Common myeloid progenitor, CD34-positive (primary cell): ENCODE measurements at regions of chr4 and their contacts with region 1.

Region 1: DNA sequence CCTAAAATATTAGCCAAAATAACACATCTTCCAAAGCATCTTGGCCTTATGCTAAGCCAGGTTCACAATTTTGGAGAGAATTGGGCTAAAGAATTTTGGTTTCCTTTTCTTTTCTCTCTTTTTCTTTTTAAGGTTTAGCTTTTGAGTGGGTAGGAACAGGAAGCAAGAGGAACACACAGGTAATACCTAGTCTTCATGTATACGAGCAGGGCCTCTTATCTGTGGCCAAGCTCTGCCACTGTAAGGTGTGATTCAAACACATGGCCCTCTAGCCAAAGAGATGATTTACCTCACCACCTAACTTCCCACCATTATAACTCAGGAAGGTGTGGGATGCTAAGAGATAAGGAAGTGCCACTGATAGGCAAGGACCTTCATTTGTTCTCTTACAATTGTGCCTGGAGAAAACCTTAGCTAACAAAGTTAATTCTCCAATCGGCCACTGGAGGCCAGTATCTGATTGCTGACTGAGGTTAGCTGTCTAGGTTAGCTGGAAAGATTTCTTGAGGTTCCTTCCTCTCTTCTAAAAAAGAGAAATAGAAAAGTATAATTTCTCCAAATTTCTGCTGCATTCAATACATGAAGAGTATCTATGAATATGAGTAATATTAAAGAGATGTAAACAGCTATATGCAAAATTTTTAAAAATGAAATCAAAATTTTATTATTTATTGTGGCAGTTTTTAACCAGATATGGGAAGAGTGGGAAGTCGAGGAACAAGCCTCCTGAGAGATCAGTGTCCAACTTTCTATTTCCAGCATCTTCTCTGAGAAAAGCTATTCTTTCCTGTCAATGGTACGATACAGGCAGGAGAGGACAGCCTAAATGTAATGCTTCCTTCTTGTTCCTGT is 30.1 kb upstream of the BBS7 start:
- DNase-seq: peak; percentile 58 to 81 (median 73)
- H3K4me3 ChIP-seq: no peak overlapping the region
- H3K27ac ChIP-seq: no peak overlapping the region
- H3K4me1 ChIP-seq: peaks cover 0 to 5% (median 1%) of the 10 kb centered on the region in 4 experiments
- H3K27me3 ChIP-seq: peaks cover 0 to 22% (median 6%) of the 10 kb centered on the region in 5 experiments

Region 2: GRCh38 chr4:121462660-121463261 is 437.6 kb before region 1 on chr4:
- CTCF ChIA-PET with region 1: no interaction called
- POLR2A ChIA-PET with region 1: no interaction called
- DNase-seq: peak; percentile 75 to 95 (median 94)
- H3K4me3 ChIP-seq: no peak overlapping the region
- H3K27ac ChIP-seq: no peak overlapping the region
- H3K4me1 ChIP-seq: peaks cover 0 to 8% (median 0%) of the 10 kb centered on the region in 4 experiments
- H3K27me3 ChIP-seq: peaks cover 0 to 2% (median 0%) of the 10 kb centered on the region in 5 experiments

Region 3: GRCh38 chr4:121811122-121811521 is 89.2 kb before region 1 on chr4:
- CTCF ChIA-PET with region 1: no interaction called
- POLR2A ChIA-PET with region 1: no interaction called
- DNase-seq: no peak
- H3K4me3 ChIP-seq: no peak overlapping the region
- H3K27ac ChIP-seq: no peak overlapping the region
- H3K4me1 ChIP-seq: no peaks in the 10 kb centered on the region
- H3K27me3 ChIP-seq: no peaks in the 10 kb centered on the region

Region 4: DNA sequence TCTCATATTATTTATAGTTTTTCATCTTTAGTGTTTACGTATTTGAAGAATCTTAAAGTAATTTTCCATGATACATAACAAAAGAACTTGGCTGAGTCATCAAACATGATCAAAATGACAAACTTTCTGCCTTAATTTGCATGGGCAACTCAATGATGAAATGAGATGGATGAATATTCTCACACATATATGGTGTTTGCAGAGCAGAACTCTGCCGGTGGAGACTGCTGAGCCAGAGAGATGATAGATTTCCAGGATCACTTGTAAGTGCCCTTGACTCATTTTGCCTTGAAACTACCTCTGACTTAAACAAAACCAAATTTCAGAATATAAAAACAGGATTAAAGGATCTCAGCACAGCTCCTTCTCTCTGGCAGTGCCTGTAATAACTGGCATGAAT is 13.3 kb after region 1 on chr4:
- CTCF ChIA-PET with region 1: interaction called, 12 read pairs
- POLR2A ChIA-PET with region 1: no interaction called
- DNase-seq: no peak
- H3K4me3 ChIP-seq: no peak overlapping the region
- H3K27ac ChIP-seq: no peak overlapping the region
- H3K4me1 ChIP-seq: no peaks in the 10 kb centered on the region
- H3K27me3 ChIP-seq: peaks cover 0 to 8% (median 5%) of the 10 kb centered on the region in 5 experiments

Region 5: DNA sequence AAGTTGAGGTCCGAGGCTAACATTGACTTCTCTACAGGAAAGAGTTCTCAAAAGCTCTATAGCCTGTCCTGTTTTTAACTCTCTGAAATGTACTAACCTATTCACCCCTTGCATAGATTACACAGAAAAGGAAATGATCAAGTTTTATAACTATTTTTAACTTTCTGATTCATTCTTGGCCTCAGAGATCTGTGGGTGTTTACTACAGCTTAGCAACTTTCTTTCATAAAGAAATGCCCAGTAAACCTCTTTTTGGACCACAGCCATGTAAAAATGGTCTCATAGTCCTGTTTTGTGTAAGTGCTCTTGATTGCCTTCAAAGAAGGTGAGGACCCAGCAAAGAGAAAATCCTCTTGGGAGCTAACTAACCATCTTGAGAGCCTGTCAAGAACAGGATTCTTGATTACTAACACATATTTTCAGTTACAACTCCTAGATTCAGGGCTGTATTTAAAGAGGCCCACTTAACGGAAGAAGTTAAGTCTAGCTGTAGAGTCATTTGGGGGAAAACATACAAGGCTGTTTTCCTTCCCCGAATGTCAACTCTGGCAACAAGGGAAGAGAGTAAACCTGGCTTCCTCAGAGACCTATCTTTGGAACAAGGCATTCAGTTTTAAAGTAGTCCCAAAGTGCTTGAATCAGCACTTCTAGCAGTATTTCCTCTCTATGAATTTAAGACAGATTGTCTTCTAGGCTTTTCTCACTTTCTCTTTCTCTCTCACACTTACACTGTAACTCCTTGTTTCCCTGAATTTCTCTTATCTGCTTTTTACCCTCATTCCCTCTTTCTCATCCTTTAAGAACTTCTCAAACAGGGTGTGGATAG is 642.3 kb after region 1 on chr4:
- CTCF ChIA-PET with region 1: no interaction called
- POLR2A ChIA-PET with region 1: no interaction called
- DNase-seq: no peak
- H3K4me3 ChIP-seq: no peak overlapping the region
- H3K27ac ChIP-seq: no peak overlapping the region
- H3K4me1 ChIP-seq: peaks cover 0 to 4% (median 0%) of the 10 kb centered on the region in 4 experiments
- H3K27me3 ChIP-seq: peaks cover 2 to 58% (median 26%) of the 10 kb centered on the region in 5 experiments

Region 6: DNA sequence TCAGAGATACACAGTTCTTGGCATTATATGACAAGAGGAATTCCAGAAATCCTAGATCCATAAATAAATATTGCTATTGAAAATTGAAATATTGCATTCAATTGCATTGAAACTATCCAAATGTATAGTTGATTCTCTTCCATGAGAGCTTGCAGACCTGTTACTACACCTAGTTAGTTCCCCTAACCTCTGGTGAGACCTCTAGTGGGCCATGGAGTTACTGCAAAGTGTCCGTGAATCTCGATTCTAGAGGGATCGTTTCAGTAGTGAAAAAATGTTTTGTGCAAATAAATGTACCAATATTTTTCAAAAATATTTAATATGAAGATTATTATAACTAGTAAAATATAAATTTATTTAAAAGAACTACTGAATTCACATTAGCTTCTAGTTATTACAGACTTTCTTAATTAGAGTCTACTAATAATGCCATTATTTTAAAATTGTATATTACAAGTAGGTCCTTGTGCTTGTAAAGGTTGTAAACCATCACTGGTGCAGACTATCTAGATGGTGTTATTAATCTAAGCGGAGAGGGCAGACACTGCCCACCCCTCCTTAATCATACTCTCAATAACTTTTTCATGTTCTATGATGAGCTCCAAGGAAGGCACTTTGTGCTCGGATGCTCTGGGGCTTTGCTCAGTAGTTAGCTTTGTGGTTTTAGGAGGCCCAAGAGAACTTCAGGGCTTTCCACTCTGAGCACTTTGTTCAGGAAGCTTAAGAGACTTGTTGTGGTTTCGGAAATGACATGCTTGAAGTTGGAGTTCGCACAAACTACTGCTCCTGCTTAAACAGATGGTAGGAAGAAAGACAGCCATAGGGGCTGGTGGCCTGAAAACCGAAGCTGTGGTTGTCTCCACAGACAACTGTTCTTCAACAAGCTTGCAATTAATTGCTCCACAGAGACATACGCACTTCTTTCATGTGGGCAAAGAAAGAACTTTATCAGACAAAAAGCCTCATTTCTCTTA is 677.7 kb after region 1 on chr4:
- CTCF ChIA-PET with region 1: interaction called, 20 read pairs
- POLR2A ChIA-PET with region 1: no interaction called
- DNase-seq: peak; percentile 82 to 97 (median 96)
- H3K4me3 ChIP-seq: peak overlapping the region in 1 of 7 experiments; percentile 25
- H3K27ac ChIP-seq: no peak overlapping the region
- H3K4me1 ChIP-seq: peaks cover 4 to 21% (median 11%) of the 10 kb centered on the region in 4 experiments
- H3K27me3 ChIP-seq: peaks cover 2 to 59% (median 21%) of the 10 kb centered on the region in 5 experiments